OCI-LY7 (cell line): ENCODE measurements at regions of chr20 and their contacts with region 1.

Region 1: DNA sequence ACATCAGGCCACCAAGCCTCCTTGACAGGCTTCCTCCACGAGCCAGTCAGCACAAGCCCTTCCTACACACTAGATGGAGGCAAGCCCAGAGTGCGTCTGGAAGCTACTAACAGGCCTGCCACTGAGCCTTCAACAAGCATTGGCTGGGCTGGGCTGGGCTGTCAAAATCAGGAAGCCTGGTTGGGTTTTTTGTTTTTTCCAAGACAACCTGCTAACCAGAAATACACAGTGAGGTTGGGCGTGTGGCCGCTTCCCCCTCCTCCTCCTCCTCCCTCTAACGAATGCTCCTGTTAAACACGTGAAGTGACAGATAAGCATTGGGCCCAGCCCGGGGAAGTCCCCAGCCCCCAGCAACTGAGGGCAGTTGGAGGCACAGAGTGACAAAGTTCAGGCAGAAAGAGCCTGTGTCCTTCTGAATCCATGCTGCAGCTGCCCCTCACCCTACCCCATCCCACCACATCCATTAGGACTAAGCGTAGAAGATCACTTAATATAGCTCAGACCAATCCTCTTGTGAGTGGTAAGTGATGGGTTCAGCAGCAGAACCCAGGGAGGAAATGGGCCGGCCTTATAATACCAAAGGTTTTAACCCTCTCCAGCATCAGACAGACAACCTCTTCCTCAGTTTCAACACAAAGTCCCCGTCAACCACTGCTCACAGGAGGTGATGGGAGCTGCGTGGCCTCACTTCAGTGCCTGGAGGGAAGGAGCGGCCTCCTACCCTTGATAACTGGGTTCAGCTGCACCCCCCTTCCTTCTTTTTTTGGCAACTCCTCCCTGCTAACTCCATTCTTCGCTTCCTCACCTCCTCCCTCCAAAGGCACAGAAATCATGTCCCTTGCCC is 1.1 kb downstream of the NFATC2 start:
- DNase-seq: peak; percentile 72
- H3K4me3 ChIP-seq: peak overlapping the region; percentile 79
- H3K27ac ChIP-seq: peak overlapping the region; percentile 77
- H3K4me1 ChIP-seq: peaks cover 58% of the 10 kb centered on the region
- CTCF ChIP-seq: no peak

Region 2: DNA sequence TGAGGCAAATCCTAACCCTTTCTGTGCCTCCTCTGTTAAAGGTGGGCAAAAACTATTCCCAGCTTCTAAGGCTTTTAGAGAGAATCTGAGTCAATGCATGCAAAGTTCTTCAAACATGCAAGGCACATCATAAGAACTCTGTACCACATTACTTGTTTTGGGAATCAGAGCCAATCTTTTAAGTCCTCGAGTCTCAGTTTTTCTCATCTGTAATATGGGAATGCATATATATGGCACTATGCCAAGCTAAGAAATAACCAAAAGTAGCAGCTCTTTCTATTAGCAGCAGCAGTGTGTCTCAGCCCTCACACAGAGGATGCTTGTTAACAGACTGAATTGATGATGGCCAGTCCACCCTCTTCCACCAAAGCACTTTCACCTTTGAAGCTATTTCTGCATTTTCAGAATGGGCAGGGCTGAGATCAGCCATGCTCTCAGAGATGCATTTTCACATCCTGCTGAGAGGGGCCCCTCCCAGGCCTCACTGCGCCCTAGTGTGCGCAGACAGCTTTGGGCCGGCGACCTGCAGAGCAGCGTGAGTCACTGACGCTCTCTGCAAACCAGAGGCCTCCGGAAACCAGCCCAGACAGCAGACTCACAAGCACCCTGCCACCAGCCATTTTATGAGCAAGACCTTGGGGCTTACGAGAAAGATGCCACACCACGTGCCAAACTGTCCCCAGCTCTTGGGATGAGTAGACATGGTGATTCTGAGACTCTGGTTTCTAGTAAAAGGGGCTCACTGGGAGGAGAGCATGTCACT is 136.9 kb before region 1 on chr20:
- CTCF ChIA-PET with region 1: no interaction called
- POLR2A ChIA-PET with region 1: no interaction called
- intact Hi-C with region 1: loop called (anchors 5 kb)
- DNase-seq: peak; percentile 88
- H3K4me3 ChIP-seq: peak overlapping the region; percentile 15
- H3K27ac ChIP-seq: peak overlapping the region; percentile 89
- H3K4me1 ChIP-seq: peaks cover 67% of the 10 kb centered on the region
- CTCF ChIP-seq: no peak

Region 3: GRCh38 chr20:51512645-51513044 is 28.8 kb before region 1 on chr20:
- CTCF ChIA-PET with region 1: no interaction called
- POLR2A ChIA-PET with region 1: no interaction called
- intact Hi-C with region 1: no loop called
- DNase-seq: no peak
- H3K4me3 ChIP-seq: no peak overlapping the region
- H3K27ac ChIP-seq: no peak overlapping the region
- H3K4me1 ChIP-seq: peaks cover 22% of the 10 kb centered on the region
- CTCF ChIP-seq: no peak

Region 4: GRCh38 chr20:51554538-51555165 is 13.2 kb after region 1 on chr20:
- CTCF ChIA-PET with region 1: no interaction called
- POLR2A ChIA-PET with region 1: interaction called, 10 read pairs
- intact Hi-C with region 1: no loop called
- DNase-seq: no peak
- H3K4me3 ChIP-seq: no peak overlapping the region
- H3K27ac ChIP-seq: no peak overlapping the region
- H3K4me1 ChIP-seq: peaks cover 9% of the 10 kb centered on the region
- CTCF ChIP-seq: no peak